Mammary epithelial cell (primary cell): ENCODE measurements at regions of chr11 and their contacts with region 1.

Region 1: GRCh38 chr11:114924042-114924441 is 245.7 kb downstream of the NXPE2 start:
- DNase-seq: no peak
- H3K4me3 ChIP-seq: no peak overlapping the region
- H3K27ac ChIP-seq: no peak overlapping the region
- H3K4me1 ChIP-seq: no peaks in the 10 kb centered on the region
- H3K27me3 ChIP-seq: peaks cover 4% of the 10 kb centered on the region
- CTCF ChIP-seq: no peak

Region 2: GRCh38 chr11:114813189-114813718 is 110.8 kb before region 1 on chr11:
- CTCF ChIA-PET with region 1: no interaction called
- dilution Hi-C with region 1: no loop called
- in situ Hi-C with region 1: no loop called
- intact Hi-C with region 1: no loop called
- DNase-seq: no peak
- H3K4me3 ChIP-seq: no peak overlapping the region
- H3K27ac ChIP-seq: no peak overlapping the region
- H3K4me1 ChIP-seq: no peaks in the 10 kb centered on the region
- H3K27me3 ChIP-seq: no peaks in the 10 kb centered on the region
- CTCF ChIP-seq: no peak

Region 3: GRCh38 chr11:114836161-114836560 is 87.9 kb before region 1 on chr11:
- CTCF ChIA-PET with region 1: no interaction called
- dilution Hi-C with region 1: no loop called
- in situ Hi-C with region 1: no loop called
- intact Hi-C with region 1: no loop called
- DNase-seq: no peak
- H3K4me3 ChIP-seq: no peak overlapping the region
- H3K27ac ChIP-seq: no peak overlapping the region
- H3K4me1 ChIP-seq: no peaks in the 10 kb centered on the region
- H3K27me3 ChIP-seq: peaks cover 2% of the 10 kb centered on the region
- CTCF ChIP-seq: no peak

Region 4: DNA sequence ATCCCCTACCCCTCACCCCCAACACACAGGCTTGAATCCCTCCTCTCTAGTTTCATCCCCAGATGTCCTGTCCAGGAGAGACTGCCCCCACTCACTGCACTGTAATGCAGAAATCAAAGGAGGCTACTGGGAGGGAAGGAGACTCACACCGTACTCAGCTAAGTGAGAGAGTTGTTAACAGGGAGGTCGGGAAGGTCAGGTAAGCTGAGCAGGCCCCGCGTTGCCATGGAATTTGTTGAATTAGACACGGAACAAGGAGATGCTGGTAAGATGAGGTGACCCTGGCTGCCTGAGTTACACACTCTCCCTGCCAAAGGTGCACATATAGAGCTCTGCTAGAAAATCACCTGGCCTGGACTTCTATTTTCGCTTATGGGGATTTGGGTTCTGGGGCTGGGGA is 47.8 kb before region 1 on chr11:
- CTCF ChIA-PET with region 1: no interaction called
- dilution Hi-C with region 1: loop called (anchors 5 kb)
- in situ Hi-C with region 1: no loop called
- intact Hi-C with region 1: no loop called
- DNase-seq: no peak
- H3K4me3 ChIP-seq: no peak overlapping the region
- H3K27ac ChIP-seq: no peak overlapping the region
- H3K4me1 ChIP-seq: no peaks in the 10 kb centered on the region
- H3K27me3 ChIP-seq: no peaks in the 10 kb centered on the region
- CTCF ChIP-seq: no peak

Region 5: DNA sequence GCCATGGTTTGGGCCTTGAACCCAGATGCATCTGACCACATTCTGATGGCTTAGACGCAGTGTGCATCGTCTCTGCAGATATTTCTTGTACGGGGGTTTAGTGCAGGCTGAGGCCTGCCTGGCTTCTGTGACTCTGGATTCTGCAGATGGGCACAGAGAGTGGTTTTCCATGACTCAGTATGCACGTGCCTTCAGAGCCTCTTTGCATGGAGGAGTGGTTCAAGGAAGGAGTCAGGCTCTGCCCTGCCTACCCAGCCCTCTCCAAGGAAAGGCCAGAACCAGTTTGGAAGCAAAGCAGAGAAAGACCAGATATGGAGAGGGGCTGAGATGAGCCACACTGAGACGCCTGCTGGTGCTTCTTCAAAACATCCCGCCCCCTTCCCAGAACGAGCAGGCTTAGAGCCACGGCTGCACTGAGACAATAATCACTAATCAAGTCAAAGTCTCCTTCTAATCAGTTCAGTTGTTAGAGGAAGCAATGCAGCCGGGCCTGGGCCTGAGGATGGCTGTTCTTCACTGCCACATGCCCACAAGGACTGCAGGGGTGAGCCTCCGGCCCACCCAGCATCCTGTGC is 63.2 kb after region 1 on chr11:
- CTCF ChIA-PET with region 1: no interaction called
- dilution Hi-C with region 1: no loop called
- in situ Hi-C with region 1: no loop called
- intact Hi-C with region 1: no loop called
- DNase-seq: peak; percentile 42
- H3K4me3 ChIP-seq: no peak overlapping the region
- H3K27ac ChIP-seq: no peak overlapping the region
- H3K4me1 ChIP-seq: peaks cover 6% of the 10 kb centered on the region
- H3K27me3 ChIP-seq: no peaks in the 10 kb centered on the region
- CTCF ChIP-seq: no peak